HAP-1 (cell line): ENCODE measurements at regions of chr7 and their contacts with region 1.

Region 1: DNA sequence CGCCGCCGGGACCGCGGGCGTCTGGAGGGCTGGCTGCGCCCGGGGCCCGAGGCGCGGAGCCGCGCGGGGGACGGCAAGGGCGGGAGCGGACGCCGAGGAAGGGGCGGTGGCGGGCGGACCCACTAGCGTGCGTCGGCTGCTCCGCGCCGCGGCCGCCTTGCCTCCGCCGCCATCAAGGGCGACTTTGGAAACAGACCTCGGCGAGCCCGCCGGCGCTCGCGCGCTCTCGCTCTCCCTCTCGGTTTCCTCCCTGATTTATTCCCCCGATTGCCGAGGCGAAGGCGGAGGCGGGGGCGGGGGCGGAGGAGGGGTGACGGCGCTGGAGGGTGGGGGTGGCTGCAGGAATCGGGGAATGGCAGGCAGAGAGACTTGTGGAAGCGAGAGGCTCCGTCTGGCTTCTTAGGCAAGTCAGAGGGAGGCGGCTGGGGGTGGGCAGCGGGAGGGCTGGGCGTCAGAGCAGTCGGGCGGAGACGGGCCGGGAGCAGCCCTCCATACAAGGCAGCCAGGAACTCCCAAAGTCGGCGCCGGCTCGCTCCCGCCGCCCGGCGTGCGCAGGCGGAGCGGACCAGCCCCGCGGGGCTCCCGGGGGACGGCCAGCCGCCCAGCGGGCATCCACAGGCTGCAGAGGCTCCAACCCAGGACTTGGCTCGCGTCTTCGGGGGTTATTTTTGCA is at the start of gene CACNA2D1:
- DNase-seq: peak; percentile 81 to 90
- H3K4me3 ChIP-seq: peak within 1 kb of the TSS; percentile 56
- H3K4me1 ChIP-seq: peaks cover 17% of the 10 kb centered on the region
- H3K27me3 ChIP-seq: no peaks in the 10 kb centered on the region

Region 2: GRCh38 chr7:81846398-81846797 is 597.3 kb before region 1 on chr7:
- in situ Hi-C with region 1: no loop called
- DNase-seq: no peak
- H3K4me3 ChIP-seq: no peak overlapping the region
- H3K4me1 ChIP-seq: no peaks in the 10 kb centered on the region
- H3K27me3 ChIP-seq: no peaks in the 10 kb centered on the region

Region 3: DNA sequence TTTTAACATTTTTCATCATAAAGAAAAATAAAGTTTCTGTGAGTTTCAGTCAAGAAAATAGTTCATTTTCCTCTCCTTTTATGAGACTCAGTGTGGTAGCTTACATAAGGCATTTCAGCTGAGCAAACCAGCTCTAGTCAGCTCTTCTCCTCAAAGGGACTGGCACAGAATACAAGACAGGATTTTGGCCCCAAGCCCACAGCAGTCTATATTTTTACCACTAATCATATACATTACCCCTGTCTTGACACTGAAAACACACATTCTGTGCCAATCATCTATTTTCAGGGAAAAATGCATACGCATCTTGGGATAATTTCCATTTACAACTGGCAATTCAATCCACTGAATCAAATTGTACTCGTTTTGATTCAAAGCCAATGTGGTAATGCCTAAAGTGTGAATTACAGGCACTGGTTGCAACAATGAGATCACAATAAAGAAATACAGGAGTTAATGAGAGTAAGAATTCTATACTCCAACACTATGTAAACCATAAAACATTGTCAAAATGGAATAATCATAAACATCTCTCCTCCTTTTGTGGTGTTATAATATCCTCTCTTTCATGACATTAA is 186.5 kb before region 1 on chr7:
- in situ Hi-C with region 1: loop called (anchors 25 kb)
- DNase-seq: no peak
- H3K4me3 ChIP-seq: no peak overlapping the region
- H3K4me1 ChIP-seq: no peaks in the 10 kb centered on the region
- H3K27me3 ChIP-seq: no peaks in the 10 kb centered on the region